ENCODE measurements at regions of chr11 and their contacts with region 1.

Region 1: GRCh38 chr11:14471127-14471526 is 28.5 kb downstream of the COPB1 start:
- DNase-seq: no peak
- H3K4me3 ChIP-seq: no peak overlapping the region
- H3K27ac ChIP-seq: no peak overlapping the region
- H3K4me1 ChIP-seq: no peaks in the 10 kb centered on the region
- H3K27me3 ChIP-seq: no peaks in the 10 kb centered on the region
- CTCF ChIP-seq: no peak
- EP300 ChIP-seq: no peak
- POLR2A ChIP-seq: no peak

Region 2: DNA sequence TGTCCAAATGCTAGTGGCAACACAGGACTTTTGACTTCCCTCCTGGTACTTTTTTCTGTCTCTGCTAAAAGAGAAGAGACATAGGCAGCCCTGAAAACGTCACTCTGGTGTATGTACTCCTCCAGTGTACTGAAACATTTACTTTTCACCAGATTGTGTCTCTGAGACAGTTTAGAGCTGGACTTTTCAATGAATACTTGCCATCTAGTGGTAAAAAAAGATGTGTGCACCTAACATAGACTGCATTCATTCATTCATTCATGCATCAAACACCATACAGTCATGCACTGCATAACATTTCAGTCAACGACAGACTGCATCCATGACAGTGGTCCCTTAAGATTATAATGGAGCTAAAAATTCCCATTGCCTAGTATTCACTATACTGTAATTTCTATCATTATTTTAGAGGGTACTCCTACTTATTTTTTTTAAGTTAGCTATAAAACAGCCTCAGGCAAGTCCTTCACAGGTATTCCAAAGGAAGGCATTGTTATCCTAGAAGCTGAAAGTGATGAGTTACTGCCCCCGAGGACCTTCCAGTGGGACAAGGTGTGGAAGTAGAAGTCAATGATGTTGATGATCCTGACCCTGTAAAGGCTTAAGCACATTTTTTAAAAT is 322.4 kb before region 1 on chr11:
- intact Hi-C with region 1: no loop called
- DNase-seq: no peak
- H3K4me3 ChIP-seq: no peak overlapping the region
- H3K27ac ChIP-seq: no peak overlapping the region
- H3K4me1 ChIP-seq: no peaks in the 10 kb centered on the region
- H3K27me3 ChIP-seq: no peaks in the 10 kb centered on the region
- CTCF ChIP-seq: peak in 2 of 4 experiments; percentile 53 to 61
- EP300 ChIP-seq: no peak
- POLR2A ChIP-seq: no peak

Region 3: GRCh38 chr11:14513800-14514199 is 42.7 kb after region 1 on chr11:
- intact Hi-C with region 1: loop called (anchors 5 kb)
- DNase-seq: no peak
- H3K4me3 ChIP-seq: no peak overlapping the region
- H3K27ac ChIP-seq: no peak overlapping the region
- H3K4me1 ChIP-seq: peaks cover 0 to 12% (median 9%) of the 10 kb centered on the region in 4 donors
- H3K27me3 ChIP-seq: no peaks in the 10 kb centered on the region
- CTCF ChIP-seq: no peak
- EP300 ChIP-seq: no peak
- POLR2A ChIP-seq: no peak